Activated B cell treated with CpG ODN at 0.5 μM for 24 hours (primary cell): ENCODE measurements at regions of chr3 and their contacts with region 1.

Region 1: GRCh38 chr3:127590593-127591477 is at the start of gene TPRA1:
- DNase-seq: peak; percentile 79
- ATAC-seq: peak; percentile 82
- H3K4me3 Mint-ChIP-seq: peak within 1 kb of the TSS; percentile 90
- H3K27ac Mint-ChIP-seq: peak within 1 kb of the TSS; percentile 85
- H3K4me1 Mint-ChIP-seq: peaks cover 28% of the 10 kb centered on the region
- H3K27me3 Mint-ChIP-seq: no peaks in the 10 kb centered on the region
- CTCF ChIP-seq: no peak
- total RNA-seq, gene TPRA1: 17.5 and 18.3 TPM in 2 replicates

Region 2: GRCh38 chr3:127566833-127567232 is 24.0 kb before region 1 on chr3:
- CTCF ChIA-PET with region 1: no interaction called
- POLR2A ChIA-PET with region 1: no interaction called
- intact Hi-C with region 1: no loop called
- DNase-seq: no peak
- ATAC-seq: no peak
- H3K4me3 Mint-ChIP-seq: no peak overlapping the region
- H3K27ac Mint-ChIP-seq: no peak overlapping the region
- H3K4me1 Mint-ChIP-seq: peaks cover 3% of the 10 kb centered on the region
- H3K27me3 Mint-ChIP-seq: no peaks in the 10 kb centered on the region
- CTCF ChIP-seq: no peak

Region 3: DNA sequence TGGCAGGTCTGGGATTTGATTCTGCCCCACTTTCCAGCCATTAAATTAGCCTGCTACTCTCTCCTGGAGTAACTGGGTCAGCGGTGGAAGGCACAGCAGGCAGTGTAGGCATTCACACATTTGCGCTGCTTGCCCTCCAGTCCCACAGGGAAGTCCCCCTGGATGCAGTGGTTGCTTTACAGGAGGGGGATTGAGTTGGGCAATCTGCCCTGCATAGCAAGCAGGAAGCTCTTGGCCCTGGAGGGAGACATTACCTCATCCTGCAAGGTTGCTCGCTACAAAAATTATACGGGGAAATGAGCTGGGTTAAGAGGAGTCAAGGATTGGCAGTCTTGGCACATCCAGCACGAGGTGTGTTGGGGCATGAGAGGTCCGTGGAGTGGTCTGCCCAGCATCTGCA is 22.1 kb after region 1 on chr3:
- CTCF ChIA-PET with region 1: no interaction called
- POLR2A ChIA-PET with region 1: no interaction called
- intact Hi-C with region 1: loop called (anchors 2 kb)
- DNase-seq: no peak
- ATAC-seq: no peak
- H3K4me3 Mint-ChIP-seq: no peak overlapping the region
- H3K27ac Mint-ChIP-seq: no peak overlapping the region
- H3K4me1 Mint-ChIP-seq: peaks cover 22% of the 10 kb centered on the region
- H3K27me3 Mint-ChIP-seq: no peaks in the 10 kb centered on the region
- CTCF ChIP-seq: no peak

Region 4: GRCh38 chr3:127628788-127629466 is 38.1 kb after region 1 on chr3 and contains the start of gene PODXL2:
- CTCF ChIA-PET with region 1: no interaction called
- POLR2A ChIA-PET with region 1: no interaction called
- intact Hi-C with region 1: loop called (anchors 2 kb)
- DNase-seq: peak; percentile 39
- ATAC-seq: peak; percentile 68
- H3K4me3 Mint-ChIP-seq: peak within 1 kb of the TSS; percentile 84
- H3K27ac Mint-ChIP-seq: peak within 1 kb of the TSS; percentile 20
- H3K4me1 Mint-ChIP-seq: peaks cover 21% of the 10 kb centered on the region
- H3K27me3 Mint-ChIP-seq: peaks cover 11% of the 10 kb centered on the region
- CTCF ChIP-seq: no peak
- total RNA-seq, gene PODXL2: 3.3 and 3.7 TPM in 2 replicates

Region 5: DNA sequence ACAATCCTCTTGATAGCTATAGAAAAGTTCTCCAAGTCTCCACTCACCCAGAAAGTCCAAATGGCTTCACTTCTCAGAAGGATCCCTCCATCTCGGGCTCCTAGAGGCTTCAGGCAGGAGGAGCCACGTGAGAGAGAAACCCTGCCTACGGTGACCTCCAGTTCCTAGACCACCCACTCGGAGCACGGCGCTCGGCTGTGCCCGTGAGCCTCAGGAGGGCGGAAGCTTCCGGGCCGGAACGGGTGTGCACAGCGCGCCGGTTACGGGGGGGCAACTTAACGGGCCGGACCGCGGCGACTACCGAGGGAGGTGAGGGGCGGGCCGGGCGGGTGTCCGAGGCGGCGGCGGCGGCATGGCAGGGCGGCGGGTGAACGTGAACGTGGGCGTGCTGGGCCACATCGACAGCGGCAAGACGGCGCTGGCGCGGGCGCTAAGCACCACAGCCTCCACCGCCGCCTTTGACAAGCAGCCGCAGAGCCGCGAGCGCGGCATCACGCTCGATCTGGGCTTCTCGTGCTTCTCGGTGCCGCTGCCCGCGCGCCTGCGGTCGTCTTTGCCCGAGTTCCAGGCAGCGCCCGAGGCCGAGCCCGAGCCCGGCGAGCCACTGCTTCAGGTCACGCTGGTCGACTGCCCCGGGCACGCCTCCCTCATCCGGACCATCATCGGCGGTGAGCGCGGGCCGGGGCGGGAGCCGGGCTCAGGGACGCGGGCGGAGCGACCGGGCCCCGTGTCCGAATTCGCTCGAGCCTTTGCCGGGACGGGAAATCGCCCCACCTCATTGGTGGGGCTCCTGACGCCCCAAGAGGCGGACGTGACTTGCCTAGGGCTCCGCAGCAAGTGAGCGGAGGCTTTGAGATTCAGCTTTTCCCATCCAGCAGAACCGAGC is 562.6 kb after region 1 on chr3 and contains the start of gene EEFSEC:
- CTCF ChIA-PET with region 1: no interaction called
- POLR2A ChIA-PET with region 1: no interaction called
- intact Hi-C with region 1: loop called (anchors 10 kb)
- DNase-seq: peak; percentile 89
- ATAC-seq: peak; percentile 95
- H3K4me3 Mint-ChIP-seq: peak within 1 kb of the TSS; percentile 96
- H3K27ac Mint-ChIP-seq: peak within 1 kb of the TSS; percentile 95
- H3K4me1 Mint-ChIP-seq: peaks cover 17% of the 10 kb centered on the region
- H3K27me3 Mint-ChIP-seq: no peaks in the 10 kb centered on the region
- CTCF ChIP-seq: no peak
- total RNA-seq, gene EEFSEC: 20.0 and 21.3 TPM in 2 replicates